ENCODE measurements at regions of chr7 and their contacts with region 1.

Region 1: DNA sequence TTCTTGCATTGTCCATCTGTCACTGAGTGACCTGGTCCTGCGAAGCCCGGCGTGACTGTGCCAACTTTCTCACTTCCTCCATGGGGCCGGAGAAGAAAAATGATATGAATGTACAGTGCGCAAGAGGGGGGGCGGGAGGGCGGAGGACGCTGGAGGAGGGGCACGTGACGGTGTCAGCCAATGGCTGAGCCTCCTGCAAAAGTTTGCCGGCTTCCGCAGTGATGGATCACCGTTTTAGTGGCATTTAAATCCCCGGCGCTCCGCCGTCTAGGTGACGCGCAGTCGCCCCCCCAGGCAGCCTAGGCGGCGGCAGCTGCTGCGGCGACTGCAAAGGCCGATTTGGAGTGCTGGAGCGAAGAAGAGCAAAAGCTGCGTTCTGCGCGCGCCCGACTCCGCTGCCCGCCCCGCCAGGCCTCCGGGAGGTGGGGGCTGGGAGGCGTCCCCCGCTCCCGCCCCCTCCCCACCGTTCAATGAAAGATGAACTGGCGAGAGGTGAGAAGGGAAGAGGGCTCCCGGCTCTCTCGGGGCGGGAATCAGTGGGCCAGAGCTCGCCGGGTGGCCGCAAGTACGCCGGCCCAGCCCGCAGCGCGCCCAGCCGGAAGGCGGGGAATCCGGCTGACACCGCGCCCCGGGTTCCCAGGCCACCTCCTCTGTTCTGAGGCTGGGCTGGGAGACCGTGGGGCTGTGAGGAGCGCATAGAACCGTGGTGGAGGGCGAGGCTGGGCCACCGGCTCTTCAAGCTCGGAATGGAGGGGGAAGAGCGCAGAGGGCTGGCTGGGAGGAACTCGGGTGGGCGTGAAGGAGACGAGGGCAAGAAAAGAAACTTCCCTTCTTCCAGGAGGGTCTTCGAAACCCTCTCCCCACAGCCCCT is at the start of gene HOXA1:
- DNase-seq: peak; percentile 91
- ATAC-seq: peak; percentile 73
- total RNA-seq, gene HOXA1: 2.4 to 3.0 TPM

Region 2: GRCh38 chr7:26864309-26865093 is 231.6 kb before region 1 on chr7 and contains the start of gene SKAP2:
- intact Hi-C with region 1: loop called in 1 of 2 experiments (anchors 5 kb)
- DNase-seq: peak; percentile 99
- ATAC-seq: peak; percentile 91
- total RNA-seq, gene SKAP2: 39.3 to 46.6 TPM

Region 3: GRCh38 chr7:27031289-27032172 is 64.6 kb before region 1 on chr7:
- intact Hi-C with region 1: no loop called
- DNase-seq: no peak
- ATAC-seq: peak; percentile 52